Naive thymus-derived CD4-positive, alpha-beta T cell (primary cell): ENCODE measurements at regions of chr7 and their contacts with region 1.

Region 1: DNA sequence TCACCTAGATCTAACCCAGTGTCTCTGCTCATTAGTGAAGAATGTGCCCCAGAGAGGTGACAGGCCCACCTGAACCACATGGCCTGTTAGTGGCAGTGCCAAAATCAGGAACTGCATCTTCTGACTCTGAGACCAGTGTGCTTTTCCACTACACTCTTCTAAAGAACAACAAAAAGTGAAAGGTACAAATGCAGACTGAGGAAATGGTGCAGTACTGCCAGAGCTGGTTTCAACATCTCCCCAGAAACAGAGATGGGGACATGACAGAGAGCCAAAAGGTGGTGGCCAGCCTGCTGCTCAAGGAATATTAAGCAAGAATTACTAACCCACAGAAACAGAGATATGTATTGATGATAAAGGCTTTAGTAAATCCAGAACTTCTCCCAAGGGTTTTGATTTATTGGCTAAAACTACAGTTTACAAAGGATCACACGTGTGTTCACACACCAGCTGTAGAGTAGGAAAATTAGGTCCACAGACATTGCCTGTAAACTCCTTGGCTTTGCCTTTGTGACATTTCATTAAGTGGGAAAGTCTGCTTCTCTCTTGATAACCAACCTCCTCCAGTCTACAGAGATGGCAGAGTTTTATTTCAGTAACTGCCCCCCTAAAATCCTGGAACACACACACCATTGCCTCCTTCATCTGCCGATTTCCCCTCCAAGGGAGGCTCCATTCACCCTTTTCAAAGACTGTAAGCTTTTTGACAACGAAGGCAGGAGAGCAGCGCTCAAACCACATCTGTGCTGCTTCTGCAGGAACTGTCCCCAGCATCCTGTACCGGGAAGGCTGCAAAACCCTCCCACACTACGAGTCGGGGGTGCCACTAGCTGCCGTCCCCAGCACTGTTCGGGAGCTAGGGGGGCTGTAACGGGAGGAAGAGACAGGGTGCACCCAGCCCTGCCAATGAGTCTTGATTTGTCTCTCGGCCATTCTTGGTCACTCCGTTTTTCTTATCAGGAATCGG is 29.8 kb downstream of the GSDME start:
- DNase-seq: no peak
- ATAC-seq: no peak
- H3K4me3 ChIP-seq: no peak overlapping the region
- H3K4me3 Mint-ChIP-seq: peak overlapping the region in 5 of 10 donors; percentile 15 to 72 (median 18)
- H3K27ac ChIP-seq: no peak overlapping the region
- H3K27ac Mint-ChIP-seq: peak overlapping the region in 2 of 9 donors; percentile 46 to 76
- H3K4me1 ChIP-seq: peaks cover 0 to 21% of the 10 kb centered on the region in 2 donors
- H3K4me1 Mint-ChIP-seq: peaks cover 14 to 35% (median 23%) of the 10 kb centered on the region in 7 donors
- H3K27me3 ChIP-seq: no peaks in the 10 kb centered on the region
- H3K27me3 Mint-ChIP-seq: peaks cover 0 to 20% (median 5%) of the 10 kb centered on the region in 5 donors

Region 2: GRCh38 chr7:24757353-24758275 is 30.2 kb after region 1 on chr7 and contains the start of gene GSDME:
- CTCF ChIA-PET with region 1: no interaction called
- POLR2A ChIA-PET with region 1: interaction called, 3 read pairs
- intact Hi-C with region 1: loop called in 1 of 2 experiments (anchors 1 kb)
- DNase-seq: peak in 7 of 9 donors; percentile 10 to 67 (median 14)
- ATAC-seq: peak; percentile 73
- H3K4me3 ChIP-seq: peak within 1 kb of the TSS; percentile 46
- H3K4me3 Mint-ChIP-seq: peak within 1 kb of the TSS; percentile 74 to 94 (median 84)
- H3K27ac ChIP-seq: no peak within 1 kb of the TSS
- H3K27ac Mint-ChIP-seq: peak within 1 kb of the TSS in 3 of 9 donors; percentile 11 to 43 (median 38)
- H3K4me1 ChIP-seq: peaks cover 5 to 10% of the 10 kb centered on the region in 2 donors
- H3K4me1 Mint-ChIP-seq: peaks cover 9 to 30% (median 24%) of the 10 kb centered on the region in 7 donors
- H3K27me3 ChIP-seq: peaks cover 3 to 7% of the 10 kb centered on the region in 2 donors
- H3K27me3 Mint-ChIP-seq: peaks cover 42 to 67% (median 53%) of the 10 kb centered on the region in 5 donors
- total RNA-seq, gene GSDME: 0.42 to 5.0 (median 0.92) TPM

Region 3: DNA sequence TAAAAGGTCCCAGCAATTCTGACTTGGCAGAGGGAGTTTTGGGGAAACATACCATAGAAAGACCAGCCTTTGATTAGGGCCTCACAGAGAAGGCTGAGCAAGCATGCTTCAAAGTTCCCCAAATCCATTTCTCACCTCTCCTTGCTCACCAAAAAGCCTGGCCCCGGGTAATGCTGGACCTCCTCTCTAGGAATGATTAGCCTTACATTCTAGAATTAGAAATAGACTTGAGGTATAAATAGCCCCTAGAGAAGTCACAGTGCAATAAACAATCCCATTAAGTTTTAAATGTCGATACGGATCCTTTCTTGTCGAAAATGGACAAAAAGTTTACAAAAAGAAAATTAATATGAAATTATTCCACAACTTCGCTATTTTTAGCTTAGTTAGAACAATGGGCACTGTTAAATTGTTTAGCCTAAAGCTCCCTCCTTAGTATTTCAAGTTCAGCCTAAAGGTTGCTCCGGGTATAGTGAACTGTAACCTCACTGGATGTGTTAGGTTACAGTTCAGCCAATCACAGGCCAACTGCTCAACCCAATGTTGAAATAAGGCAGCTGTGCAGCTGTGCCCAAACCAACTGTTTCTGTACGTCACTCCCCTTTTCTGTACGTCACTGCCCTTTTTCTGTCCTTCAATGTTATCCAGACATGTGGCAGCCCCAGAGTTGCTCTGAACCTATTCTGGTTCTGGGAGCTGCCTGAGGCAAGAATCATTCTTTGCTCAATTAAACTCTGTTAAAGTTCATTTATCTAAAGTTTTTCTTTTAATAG is 37.7 kb after region 1 on chr7:
- CTCF ChIA-PET with region 1: no interaction called
- POLR2A ChIA-PET with region 1: no interaction called
- intact Hi-C with region 1: loop called in 1 of 2 experiments (anchors 5 kb)
- DNase-seq: no peak
- ATAC-seq: no peak
- H3K4me3 ChIP-seq: no peak overlapping the region
- H3K4me3 Mint-ChIP-seq: no peak overlapping the region
- H3K27ac ChIP-seq: no peak overlapping the region
- H3K27ac Mint-ChIP-seq: no peak overlapping the region
- H3K4me1 ChIP-seq: no peaks in the 10 kb centered on the region
- H3K4me1 Mint-ChIP-seq: peaks cover 0 to 22% (median 0%) of the 10 kb centered on the region in 7 donors
- H3K27me3 ChIP-seq: no peaks in the 10 kb centered on the region
- H3K27me3 Mint-ChIP-seq: peaks cover 32 to 57% (median 34%) of the 10 kb centered on the region in 5 donors